Caco-2 (cell line): ENCODE measurements at regions of chr9 and their contacts with region 1.

Region 1: GRCh38 chr9:120985810-120986222 is 59.2 kb upstream of the TRAF1 start:
- DNase-seq: peak in 1 of 2 experiments; percentile 55
- H3K4me3 ChIP-seq: no peak overlapping the region
- H3K4me3 Mint-ChIP-seq: no peak overlapping the region
- H3K27ac Mint-ChIP-seq: no peak overlapping the region
- H3K4me1 ChIP-seq: no peaks in the 10 kb centered on the region; the same call in 1 of the 2 replicates
- H3K4me1 Mint-ChIP-seq: peaks cover 19% of the 10 kb centered on the region
- H3K27me3 ChIP-seq: no peaks in the 10 kb centered on the region
- H3K27me3 Mint-ChIP-seq: no peaks in the 10 kb centered on the region
- CTCF ChIP-seq: peak; percentile 59 to 62

Region 2: GRCh38 chr9:120742951-120743416 is 242.8 kb before region 1 on chr9:
- CTCF ChIA-PET with region 1: no interaction called
- POLR2A ChIA-PET with region 1: no interaction called
- intact Hi-C with region 1: loop called (anchors 5 kb)
- DNase-seq: peak in 1 of 2 experiments; percentile 50
- H3K4me3 ChIP-seq: no peak overlapping the region
- H3K4me3 Mint-ChIP-seq: no peak overlapping the region
- H3K27ac Mint-ChIP-seq: no peak overlapping the region
- H3K4me1 ChIP-seq: no peaks in the 10 kb centered on the region
- H3K4me1 Mint-ChIP-seq: no peaks in the 10 kb centered on the region
- H3K27me3 ChIP-seq: no peaks in the 10 kb centered on the region
- H3K27me3 Mint-ChIP-seq: no peaks in the 10 kb centered on the region
- CTCF ChIP-seq: peak; percentile 67 to 78

Region 3: GRCh38 chr9:121085661-121086060 is 99.8 kb after region 1 on chr9:
- CTCF ChIA-PET with region 1: no interaction called
- POLR2A ChIA-PET with region 1: no interaction called
- intact Hi-C with region 1: no loop called
- DNase-seq: no peak
- H3K4me3 ChIP-seq: no peak overlapping the region
- H3K4me3 Mint-ChIP-seq: no peak overlapping the region
- H3K27ac Mint-ChIP-seq: no peak overlapping the region
- H3K4me1 ChIP-seq: no peaks in the 10 kb centered on the region
- H3K4me1 Mint-ChIP-seq: no peaks in the 10 kb centered on the region
- H3K27me3 ChIP-seq: no peaks in the 10 kb centered on the region
- H3K27me3 Mint-ChIP-seq: no peaks in the 10 kb centered on the region
- CTCF ChIP-seq: no peak

Region 4: GRCh38 chr9:121185178-121185745 is 199.4 kb after region 1 on chr9:
- CTCF ChIA-PET with region 1: no interaction called
- POLR2A ChIA-PET with region 1: no interaction called
- intact Hi-C with region 1: no loop called
- DNase-seq: no peak
- H3K4me3 ChIP-seq: no peak overlapping the region
- H3K4me3 Mint-ChIP-seq: no peak overlapping the region
- H3K27ac Mint-ChIP-seq: no peak overlapping the region
- H3K4me1 ChIP-seq: peaks cover 42% of the 10 kb centered on the region
- H3K4me1 Mint-ChIP-seq: peaks cover 46% of the 10 kb centered on the region
- H3K27me3 ChIP-seq: no peaks in the 10 kb centered on the region
- H3K27me3 Mint-ChIP-seq: no peaks in the 10 kb centered on the region
- CTCF ChIP-seq: no peak